Transverse colon (tissue), 4 donors: ENCODE measurements at regions of chr19 and their contacts with region 1.

Region 1: DNA sequence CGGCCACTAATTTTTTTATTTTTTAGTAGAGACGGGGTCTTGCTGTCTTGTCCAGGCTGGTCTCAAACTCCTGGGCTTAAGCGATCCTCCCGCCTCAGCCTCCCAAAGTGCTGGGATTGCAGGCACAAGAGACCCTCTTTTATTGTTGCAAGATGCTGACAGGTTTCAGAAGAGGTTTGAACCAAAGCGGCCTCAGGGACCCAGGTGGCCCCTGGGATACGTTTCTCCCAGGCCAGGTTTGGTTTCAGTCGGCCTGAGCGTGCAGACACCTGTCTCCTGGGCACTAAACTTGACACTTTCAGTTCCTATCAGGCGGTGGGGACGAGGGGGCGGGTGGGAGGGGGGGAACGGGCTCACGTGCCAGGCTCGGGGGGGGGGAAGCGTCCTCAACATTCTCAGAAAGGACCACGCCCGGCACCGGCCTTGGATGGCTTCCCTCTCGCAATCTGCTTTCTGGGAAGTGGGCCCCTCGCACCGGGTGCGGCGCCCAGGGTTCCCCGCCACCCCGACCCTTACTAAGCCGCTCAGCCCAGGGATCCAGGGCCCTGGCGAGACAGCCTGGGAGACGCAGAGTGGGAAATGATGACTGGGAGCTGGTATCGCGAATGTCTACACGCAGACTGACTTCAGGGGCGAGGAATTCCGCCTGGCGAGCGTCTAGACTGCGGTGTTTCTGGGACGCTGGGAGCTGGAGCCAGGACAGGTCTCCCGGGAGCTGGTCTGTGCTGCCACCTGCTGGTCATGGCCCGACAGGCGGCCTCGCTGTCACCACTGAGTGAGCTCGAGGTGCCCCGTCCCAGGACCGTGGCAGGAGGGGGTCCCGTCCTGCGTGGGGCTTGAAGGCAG is 91.6 kb downstream of the GNG7 start:
- DNase-seq: peak; percentile 95
- H3K4me3 ChIP-seq: peak overlapping the region; percentile 24 to 53 (median 30)
- H3K27ac ChIP-seq: peak overlapping the region; percentile 74 to 82 (median 76)
- H3K4me1 ChIP-seq: peaks cover 0 to 19% (median 8%) of the 10 kb centered on the region in 4 donors
- H3K27me3 ChIP-seq: no peaks in the 10 kb centered on the region
- CTCF ChIP-seq: peak; percentile 96 to 98 (median 97)
- EP300 ChIP-seq: peak; percentile 65
- POLR2A ChIP-seq: no peak

Region 2: DNA sequence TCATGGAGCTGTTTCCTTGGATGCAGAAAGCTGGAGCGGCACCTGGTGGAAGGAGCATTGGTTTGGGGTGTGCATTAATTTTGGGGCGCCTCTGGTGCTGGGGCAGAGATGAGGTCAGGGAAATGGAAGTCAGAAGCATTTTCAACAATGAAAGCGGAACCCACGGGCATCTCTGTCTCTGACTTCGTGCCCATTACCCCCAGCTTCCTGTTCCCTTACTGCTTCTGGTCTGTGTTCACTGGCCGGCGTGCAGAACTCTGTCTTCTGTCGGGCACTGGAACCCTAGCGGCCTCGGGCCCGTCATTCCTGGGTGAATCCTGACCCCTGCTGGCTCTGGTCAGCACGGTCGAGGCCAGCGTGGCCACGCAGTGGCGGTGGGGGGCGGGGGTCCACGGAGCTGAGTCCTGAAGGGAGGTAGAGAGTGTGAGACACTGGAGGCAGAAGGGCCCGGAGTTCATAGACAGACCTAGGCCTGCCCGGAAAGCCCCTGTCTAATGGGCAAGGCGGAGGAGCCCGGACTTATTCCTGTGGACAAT is 295.0 kb before region 1 on chr19:
- in situ Hi-C with region 1: loop called in 1 of 4 experiments (anchors 25 kb)
- intact Hi-C with region 1: no loop called
- DNase-seq: peak; percentile 71
- H3K4me3 ChIP-seq: no peak overlapping the region
- H3K27ac ChIP-seq: no peak overlapping the region
- H3K4me1 ChIP-seq: peaks cover 0 to 3% (median 0%) of the 10 kb centered on the region in 4 donors
- H3K27me3 ChIP-seq: peaks cover 38% of the 10 kb centered on the region
- CTCF ChIP-seq: peak; percentile 44 to 70 (median 51)
- EP300 ChIP-seq: no peak
- POLR2A ChIP-seq: no peak

Region 3: DNA sequence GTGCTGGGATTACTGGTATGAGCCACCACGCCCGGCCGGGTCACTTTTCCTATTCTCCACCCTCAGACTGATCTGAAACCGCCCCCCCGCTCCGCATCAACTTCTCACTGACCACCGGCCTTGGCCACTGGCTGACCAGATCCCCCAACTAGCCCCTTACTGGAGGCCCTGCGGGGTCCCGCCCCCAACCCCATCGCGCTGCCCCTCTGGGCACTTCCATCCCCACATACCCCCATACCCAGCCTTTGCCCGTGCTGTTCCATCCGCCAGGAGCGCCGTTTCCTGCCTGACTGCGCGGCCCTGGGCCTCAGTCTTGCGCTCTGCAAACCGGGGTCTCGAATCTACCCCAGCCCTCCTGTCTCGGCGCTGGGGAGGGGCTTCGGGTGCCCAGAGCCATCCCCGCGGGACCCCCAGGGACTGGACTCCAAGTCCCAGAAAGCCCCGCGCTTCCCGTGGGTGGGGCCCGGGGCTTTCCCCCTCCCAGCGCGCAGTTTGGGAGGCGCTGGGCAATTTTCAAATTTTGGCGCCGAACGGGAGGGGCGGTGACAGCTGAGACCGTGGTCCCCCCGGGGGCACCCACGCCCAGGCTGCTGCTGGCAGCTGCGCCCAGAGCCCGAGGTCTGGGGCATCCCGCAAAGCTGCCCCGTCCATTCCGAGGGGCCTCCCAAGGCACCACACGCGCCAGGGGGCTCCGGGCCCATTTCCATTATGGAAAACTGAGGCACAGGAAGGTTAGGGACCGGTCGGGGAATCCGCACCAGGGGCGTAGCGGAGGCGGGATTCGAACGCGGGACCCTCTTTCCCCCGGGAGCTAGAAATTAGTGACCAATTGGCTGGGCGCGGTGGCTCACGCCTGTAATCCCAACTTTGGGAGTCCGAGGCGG is 148.9 kb before region 1 on chr19:
- in situ Hi-C with region 1: loop called in 1 of 4 experiments (anchors 10 kb)
- intact Hi-C with region 1: no loop called
- DNase-seq: peak; percentile 54
- H3K4me3 ChIP-seq: peak overlapping the region; percentile 43 to 64 (median 50)
- H3K27ac ChIP-seq: peak overlapping the region; percentile 33 to 73 (median 44)
- H3K4me1 ChIP-seq: peaks cover 3 to 23% (median 20%) of the 10 kb centered on the region in 4 donors
- H3K27me3 ChIP-seq: no peaks in the 10 kb centered on the region
- CTCF ChIP-seq: peak in 1 of 5 experiments; percentile 15
- EP300 ChIP-seq: no peak
- POLR2A ChIP-seq: no peak

Region 4: GRCh38 chr19:2578901-2579677 is 31.8 kb before region 1 on chr19:
- in situ Hi-C with region 1: no loop called
- intact Hi-C with region 1: loop called (anchors 5 kb)
- DNase-seq: peak; percentile 89
- H3K4me3 ChIP-seq: peak overlapping the region in 3 of 4 donors; percentile 23 to 47 (median 27)
- H3K27ac ChIP-seq: peak overlapping the region; percentile 77 to 87 (median 81)
- H3K4me1 ChIP-seq: peaks cover 15 to 39% (median 28%) of the 10 kb centered on the region in 4 donors
- H3K27me3 ChIP-seq: no peaks in the 10 kb centered on the region
- CTCF ChIP-seq: peak; percentile 82 to 97 (median 90)
- EP300 ChIP-seq: peak; percentile 77
- POLR2A ChIP-seq: no peak

Region 5: DNA sequence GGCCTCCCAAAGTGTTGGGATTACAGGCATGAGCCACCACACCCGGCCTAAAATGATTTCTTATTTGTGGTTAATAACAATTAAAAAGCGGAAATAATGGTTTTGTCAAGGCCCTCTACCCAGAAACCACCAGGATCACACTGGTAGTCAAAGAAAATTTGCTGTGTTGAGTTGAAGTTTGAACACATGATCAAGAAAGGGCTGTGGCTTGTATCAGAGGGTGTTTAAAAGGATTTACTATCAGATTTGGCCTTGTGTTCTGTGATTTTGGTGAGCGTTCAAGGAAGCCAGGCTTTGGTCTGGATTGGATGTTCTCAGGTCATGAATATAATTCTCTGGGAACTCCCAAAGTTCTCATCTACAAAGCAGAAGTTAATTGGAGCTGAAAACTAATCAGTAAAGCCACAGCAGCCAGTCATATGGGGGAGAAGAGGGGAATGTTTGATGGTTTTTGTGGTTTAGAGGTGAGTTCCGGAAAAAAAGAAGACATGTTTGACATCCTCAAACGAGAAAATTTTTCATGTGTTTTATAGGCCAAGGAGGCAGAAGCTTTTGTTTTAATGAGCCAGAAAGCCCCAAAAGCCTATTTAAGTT is 245.7 kb after region 1 on chr19:
- in situ Hi-C with region 1: no loop called
- intact Hi-C with region 1: no loop called
- DNase-seq: no peak
- H3K4me3 ChIP-seq: no peak overlapping the region
- H3K27ac ChIP-seq: no peak overlapping the region
- H3K4me1 ChIP-seq: no peaks in the 10 kb centered on the region
- H3K27me3 ChIP-seq: no peaks in the 10 kb centered on the region
- CTCF ChIP-seq: no peak
- EP300 ChIP-seq: no peak
- POLR2A ChIP-seq: no peak